Transverse colon (tissue), 4 donors: ENCODE measurements at regions of chr5 and their contacts with region 1.

Region 1: GRCh38 chr5:108006791-108007190 is 336.1 kb upstream of the EFNA5 start:
- DNase-seq: no peak
- H3K4me3 ChIP-seq: no peak overlapping the region
- H3K27ac ChIP-seq: no peak overlapping the region
- H3K4me1 ChIP-seq: peaks cover 0 to 5% (median 3%) of the 10 kb centered on the region in 4 donors
- H3K27me3 ChIP-seq: no peaks in the 10 kb centered on the region
- CTCF ChIP-seq: no peak
- EP300 ChIP-seq: no peak
- POLR2A ChIP-seq: no peak

Region 2: GRCh38 chr5:107893642-107894041 is 113.1 kb before region 1 on chr5:
- in situ Hi-C with region 1: no loop called
- intact Hi-C with region 1: loop called (anchors 5 kb)
- DNase-seq: no peak
- H3K4me3 ChIP-seq: no peak overlapping the region
- H3K27ac ChIP-seq: no peak overlapping the region
- H3K4me1 ChIP-seq: peaks cover 0 to 7% (median 0%) of the 10 kb centered on the region in 4 donors
- H3K27me3 ChIP-seq: no peaks in the 10 kb centered on the region
- CTCF ChIP-seq: no peak
- EP300 ChIP-seq: no peak
- POLR2A ChIP-seq: no peak